ENCODE measurements at regions of chr13 and their contacts with region 1.

Region 1: GRCh38 chr13:50006426-50007135 is 8.7 kb upstream of the KCNRG start:
- DNase-seq: no peak
- H3K4me3 ChIP-seq: no peak overlapping the region
- H3K4me3 Mint-ChIP-seq: no peak overlapping the region
- H3K27ac ChIP-seq: peak overlapping the region in 1 of 2 donors; percentile 43
- H3K27ac Mint-ChIP-seq: peak overlapping the region in 3 of 7 donors; percentile 59 to 87 (median 62)
- H3K4me1 ChIP-seq: no peaks in the 10 kb centered on the region
- H3K4me1 Mint-ChIP-seq: peaks cover 5% of the 10 kb centered on the region
- H3K27me3 ChIP-seq: no peaks in the 10 kb centered on the region
- H3K27me3 Mint-ChIP-seq: no peaks in the 10 kb centered on the region
- CTCF ChIP-seq: no peak

Region 2: GRCh38 chr13:50069261-50069660 is 62.7 kb after region 1 on chr13:
- intact Hi-C with region 1: loop called in 1 of 2 experiments (anchors 10 kb)
- DNase-seq: peak; percentile 23 to 36 (median 26)
- H3K4me3 ChIP-seq: no peak overlapping the region
- H3K4me3 Mint-ChIP-seq: no peak overlapping the region
- H3K27ac ChIP-seq: peak overlapping the region in 1 of 2 donors; percentile 72
- H3K27ac Mint-ChIP-seq: peak overlapping the region in 6 of 7 donors; percentile 12 to 70 (median 56)
- H3K4me1 ChIP-seq: peaks cover 5 to 17% of the 10 kb centered on the region in 2 donors
- H3K4me1 Mint-ChIP-seq: peaks cover 25% of the 10 kb centered on the region
- H3K27me3 ChIP-seq: no peaks in the 10 kb centered on the region
- H3K27me3 Mint-ChIP-seq: no peaks in the 10 kb centered on the region
- CTCF ChIP-seq: no peak

Measured in CD14-positive monocyte (primary cell).